Cardiac septum (tissue), 1 donor: ENCODE measurements at regions of chrX and their contacts with region 1.

Region 1: DNA sequence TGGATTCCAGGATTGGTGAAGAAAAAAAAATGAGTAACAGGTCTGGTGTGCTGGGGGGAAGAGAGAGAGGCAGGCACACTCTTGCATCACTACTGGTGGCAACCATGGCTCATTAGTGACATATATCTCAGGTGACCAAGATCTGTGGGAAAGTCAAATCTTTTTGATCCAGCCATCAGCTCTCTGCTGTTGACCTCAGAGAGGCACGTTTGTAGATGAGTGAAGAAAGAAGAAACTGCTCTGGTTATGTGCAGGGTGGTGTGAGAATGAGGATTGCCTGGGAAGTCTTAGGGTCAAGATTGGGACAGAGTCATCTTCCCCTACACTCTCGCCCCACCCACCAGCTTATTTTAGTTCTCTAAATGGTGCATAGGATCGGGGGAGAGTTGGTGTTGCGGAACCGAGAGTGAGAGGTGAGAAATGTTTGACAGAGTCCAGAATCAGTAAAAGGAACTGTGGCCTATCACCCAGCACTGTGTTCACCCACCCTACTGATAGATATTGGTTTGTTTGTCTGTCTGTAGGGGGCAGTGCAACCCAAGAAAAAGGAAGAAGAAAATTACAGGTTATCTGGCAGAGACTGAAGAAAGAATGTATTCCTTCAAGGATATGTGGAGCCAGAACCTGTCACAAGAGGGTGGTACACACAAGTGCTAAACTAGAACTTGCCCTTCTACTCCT is 21.9 kb downstream of the ARMCX6 start:
- DNase-seq: no peak

Region 2: GRCh38 chrX:101642093-101642492 is 46.2 kb after region 1 on chrX:
- intact Hi-C with region 1: no loop called
- DNase-seq: no peak

Region 3: DNA sequence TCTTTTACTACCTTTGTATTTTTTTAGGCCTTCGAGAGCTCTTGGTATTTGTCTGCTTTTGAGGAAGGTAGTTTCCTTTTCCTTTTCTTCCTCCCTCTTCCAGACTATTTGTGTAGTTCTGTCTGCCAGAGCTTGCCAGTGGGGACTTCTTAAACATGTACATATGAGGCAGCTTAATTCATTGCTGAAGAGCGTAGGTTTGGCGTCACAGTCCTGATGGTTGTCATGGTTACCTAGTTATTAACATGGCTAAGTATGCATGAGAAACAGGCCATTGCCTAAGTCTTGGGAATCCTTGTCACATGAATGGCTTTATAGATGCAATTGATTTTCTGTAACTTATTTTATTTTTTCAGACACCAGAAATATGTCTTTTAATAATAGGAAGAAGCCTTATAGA is 112.3 kb after region 1 on chrX:
- intact Hi-C with region 1: no loop called
- DNase-seq: no peak

Region 4: DNA sequence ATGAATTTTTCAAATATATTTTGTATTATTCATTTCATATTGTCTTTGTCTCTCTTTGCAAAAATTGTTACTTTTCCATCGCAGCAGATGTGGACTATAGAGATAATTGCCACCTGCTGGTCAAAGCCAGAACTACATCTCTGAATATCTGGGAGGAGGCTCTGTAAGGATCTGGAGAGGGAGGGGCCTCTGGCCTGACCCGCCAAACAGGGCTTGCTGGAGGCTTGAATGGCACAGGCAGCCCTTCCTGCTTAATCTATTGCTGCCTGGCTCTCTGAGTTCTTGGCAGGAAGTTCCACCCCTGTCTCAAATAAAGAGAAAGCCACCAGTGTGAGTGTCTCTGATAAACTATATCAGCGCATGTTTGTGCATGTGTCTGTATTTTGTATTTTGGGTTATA is 203.5 kb after region 1 on chrX:
- intact Hi-C with region 1: loop called (anchors 5 kb)
- DNase-seq: peak; percentile 81